ENCODE measurements at regions of chr4 and their contacts with region 1.

Region 1: DNA sequence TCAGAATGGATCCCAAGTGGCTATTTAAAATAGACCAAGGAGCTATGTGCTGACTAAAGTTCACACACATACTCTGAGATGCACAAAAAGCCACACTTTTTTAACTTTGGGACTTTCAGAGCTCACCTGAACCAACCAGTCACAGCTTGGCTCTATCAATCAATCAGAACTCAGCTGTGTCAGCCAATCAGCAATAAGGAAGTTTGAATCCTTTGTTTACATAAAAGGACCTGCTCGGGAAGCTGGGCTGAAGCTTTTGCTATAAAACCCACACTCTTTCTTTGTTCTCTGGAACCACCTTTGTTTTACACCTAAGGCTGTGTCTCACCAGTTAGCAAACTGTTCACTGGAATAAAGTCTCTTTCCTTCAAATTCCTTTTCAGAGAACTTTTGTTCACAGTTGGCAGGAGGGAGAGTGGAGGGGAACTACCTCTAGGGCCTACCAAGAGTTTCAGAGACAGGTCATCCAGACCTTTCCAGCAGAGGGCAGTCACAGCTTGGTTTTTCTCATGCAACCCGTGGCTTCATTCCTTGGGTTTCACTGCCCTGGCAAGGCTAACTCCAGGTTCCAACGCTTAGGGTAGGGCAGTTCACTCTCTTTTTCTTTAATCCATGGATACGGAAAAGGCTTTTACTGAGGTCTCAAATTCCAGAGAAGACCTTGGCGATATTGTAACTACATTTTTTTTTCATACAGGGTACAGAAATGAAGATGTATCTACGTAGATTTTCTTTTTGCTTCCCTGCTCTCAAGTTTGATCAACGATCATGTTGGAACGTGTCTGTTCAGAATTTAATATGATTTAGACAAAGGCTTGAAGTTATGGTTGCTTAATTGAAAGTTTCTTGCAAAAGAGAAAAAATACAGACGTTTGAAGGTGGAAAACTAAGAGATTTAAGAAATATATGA is 80.7 kb downstream of the GPRIN3 start:
- DNase-seq: peak; percentile 55 to 86 (median 77)
- ATAC-seq: peak; percentile 94
- H3K4me3 ChIP-seq: no peak overlapping the region
- H3K4me3 Mint-ChIP-seq: peak overlapping the region; percentile 70
- H3K27ac ChIP-seq: no peak overlapping the region
- H3K27ac Mint-ChIP-seq: no peak overlapping the region
- H3K4me1 ChIP-seq: no peaks in the 10 kb centered on the region
- H3K4me1 Mint-ChIP-seq: peaks cover 2% of the 10 kb centered on the region
- H3K27me3 ChIP-seq: no peaks in the 10 kb centered on the region
- H3K27me3 Mint-ChIP-seq: peaks cover 2% of the 10 kb centered on the region
- CTCF ChIP-seq: peak; percentile 82

Region 2: DNA sequence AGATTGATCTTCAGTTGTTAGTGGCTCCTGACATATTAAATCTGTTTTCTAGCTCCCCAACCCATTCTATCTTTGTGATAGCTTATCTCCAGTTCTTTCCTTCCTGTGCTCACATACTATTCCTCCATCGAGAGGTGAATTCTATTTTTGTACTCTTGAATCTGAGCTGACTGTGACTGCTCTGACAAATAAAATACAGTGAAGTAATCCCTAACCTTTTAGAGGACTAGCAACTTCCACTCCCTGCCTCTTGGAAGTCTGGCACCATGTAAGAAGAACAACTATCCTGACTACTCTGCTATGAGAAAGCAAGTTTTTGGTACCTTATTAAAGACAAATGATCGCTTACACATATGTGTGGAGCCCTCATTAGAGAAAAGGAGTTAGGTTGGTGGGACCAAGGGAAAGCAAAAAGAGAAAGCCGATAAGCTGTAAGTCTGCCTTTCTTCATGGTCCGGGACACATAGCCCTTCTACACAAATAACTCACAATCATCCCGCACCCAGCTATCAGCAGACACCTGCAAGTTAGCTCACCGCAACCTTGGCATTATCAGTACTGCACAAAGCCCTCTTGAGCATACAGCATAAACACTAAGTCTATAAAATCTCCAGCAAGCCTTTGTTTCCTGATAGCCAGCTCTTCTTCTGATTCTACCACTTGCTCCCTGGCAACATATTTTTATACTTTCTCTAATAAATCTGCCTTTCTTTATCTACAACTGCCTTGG is 929.0 kb before region 1 on chr4:
- CTCF ChIA-PET with region 1: no interaction called
- POLR2A ChIA-PET with region 1: no interaction called
- intact Hi-C with region 1: no loop called
- DNase-seq: no peak
- ATAC-seq: no peak
- H3K4me3 ChIP-seq: no peak overlapping the region
- H3K4me3 Mint-ChIP-seq: no peak overlapping the region
- H3K27ac ChIP-seq: no peak overlapping the region
- H3K27ac Mint-ChIP-seq: no peak overlapping the region
- H3K4me1 ChIP-seq: no peaks in the 10 kb centered on the region
- H3K4me1 Mint-ChIP-seq: no peaks in the 10 kb centered on the region
- H3K27me3 ChIP-seq: no peaks in the 10 kb centered on the region
- H3K27me3 Mint-ChIP-seq: no peaks in the 10 kb centered on the region
- CTCF ChIP-seq: no peak

Region 3: DNA sequence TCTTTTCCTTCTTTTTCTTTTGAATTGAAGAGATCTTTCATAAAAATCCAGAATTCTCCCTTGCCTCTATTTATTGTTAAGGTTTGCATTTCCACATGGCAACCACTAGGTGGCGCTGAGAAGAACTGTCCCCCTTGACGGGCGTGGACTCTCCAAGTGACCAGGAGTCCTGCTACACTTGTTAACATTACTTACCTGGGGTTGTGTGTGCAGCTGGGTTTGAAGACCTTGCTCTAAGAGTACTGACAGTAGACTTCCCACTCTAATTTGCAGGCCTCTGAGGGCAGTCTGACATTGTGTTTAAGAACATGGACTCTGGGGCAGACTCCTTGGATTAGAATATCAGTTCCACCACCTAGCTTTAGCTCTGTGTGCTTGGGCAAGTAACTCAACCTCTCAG is 27.9 kb after region 1 on chr4:
- CTCF ChIA-PET with region 1: interaction called, 29 read pairs
- POLR2A ChIA-PET with region 1: no interaction called
- intact Hi-C with region 1: no loop called
- DNase-seq: peak in 8 of 9 experiments; percentile 30 to 76 (median 50)
- ATAC-seq: peak; percentile 56
- H3K4me3 ChIP-seq: no peak overlapping the region
- H3K4me3 Mint-ChIP-seq: no peak overlapping the region
- H3K27ac ChIP-seq: peak overlapping the region in 1 of 2 experiments; percentile 59
- H3K27ac Mint-ChIP-seq: peak overlapping the region; percentile 20
- H3K4me1 ChIP-seq: peaks cover 16% of the 10 kb centered on the region
- H3K4me1 Mint-ChIP-seq: peaks cover 75% of the 10 kb centered on the region
- H3K27me3 ChIP-seq: no peaks in the 10 kb centered on the region
- H3K27me3 Mint-ChIP-seq: no peaks in the 10 kb centered on the region
- CTCF ChIP-seq: peak; percentile 96

Region 4: GRCh38 chr4:89294573-89295269 is 67.8 kb after region 1 on chr4:
- CTCF ChIA-PET with region 1: interaction called, 11 read pairs
- POLR2A ChIA-PET with region 1: interaction called, 3 read pairs
- intact Hi-C with region 1: no loop called
- DNase-seq: peak in 2 of 9 experiments; percentile 78 to 88
- ATAC-seq: peak; percentile 74
- H3K4me3 ChIP-seq: peak overlapping the region in 1 of 2 experiments; percentile 21
- H3K4me3 Mint-ChIP-seq: peak overlapping the region; percentile 60
- H3K27ac ChIP-seq: peak overlapping the region; percentile 42 to 82
- H3K27ac Mint-ChIP-seq: peak overlapping the region; percentile 89
- H3K4me1 ChIP-seq: peaks cover 80% of the 10 kb centered on the region
- H3K4me1 Mint-ChIP-seq: peaks cover 89% of the 10 kb centered on the region
- H3K27me3 ChIP-seq: no peaks in the 10 kb centered on the region
- H3K27me3 Mint-ChIP-seq: no peaks in the 10 kb centered on the region
- CTCF ChIP-seq: no peak

Region 5: GRCh38 chr4:89365776-89366175 is 138.9 kb after region 1 on chr4:
- CTCF ChIA-PET with region 1: no interaction called
- POLR2A ChIA-PET with region 1: no interaction called
- intact Hi-C with region 1: no loop called
- DNase-seq: no peak
- ATAC-seq: no peak
- H3K4me3 ChIP-seq: no peak overlapping the region
- H3K4me3 Mint-ChIP-seq: no peak overlapping the region
- H3K27ac ChIP-seq: no peak overlapping the region
- H3K27ac Mint-ChIP-seq: no peak overlapping the region
- H3K4me1 ChIP-seq: no peaks in the 10 kb centered on the region
- H3K4me1 Mint-ChIP-seq: peaks cover 7% of the 10 kb centered on the region
- H3K27me3 ChIP-seq: no peaks in the 10 kb centered on the region
- H3K27me3 Mint-ChIP-seq: no peaks in the 10 kb centered on the region
- CTCF ChIP-seq: no peak

Region 6: DNA sequence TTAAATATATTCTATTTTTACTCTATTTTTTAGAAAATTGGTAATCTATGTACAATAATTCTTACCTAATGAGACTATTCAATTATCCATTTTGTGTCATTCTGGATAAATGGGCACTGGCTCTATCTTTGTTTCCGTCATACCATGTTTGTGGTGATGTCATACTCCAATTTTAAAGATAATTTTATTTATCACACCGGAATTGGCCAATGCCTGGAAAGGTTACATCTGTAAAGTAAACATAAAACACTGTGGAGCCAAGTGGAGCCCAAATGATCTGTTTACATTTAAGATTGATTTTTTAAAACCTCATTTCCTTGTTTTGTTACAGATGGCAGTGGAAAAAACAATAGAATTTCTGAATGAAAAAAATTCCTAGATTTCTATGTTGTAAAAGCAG is 200.8 kb after region 1 on chr4:
- CTCF ChIA-PET with region 1: interaction called, 18 read pairs
- POLR2A ChIA-PET with region 1: no interaction called
- intact Hi-C with region 1: no loop called
- DNase-seq: no peak
- ATAC-seq: no peak
- H3K4me3 ChIP-seq: no peak overlapping the region
- H3K4me3 Mint-ChIP-seq: no peak overlapping the region
- H3K27ac ChIP-seq: no peak overlapping the region
- H3K27ac Mint-ChIP-seq: no peak overlapping the region
- H3K4me1 ChIP-seq: no peaks in the 10 kb centered on the region
- H3K4me1 Mint-ChIP-seq: no peaks in the 10 kb centered on the region
- H3K27me3 ChIP-seq: no peaks in the 10 kb centered on the region
- H3K27me3 Mint-ChIP-seq: peaks cover 4% of the 10 kb centered on the region
- CTCF ChIP-seq: no peak

Region 7: DNA sequence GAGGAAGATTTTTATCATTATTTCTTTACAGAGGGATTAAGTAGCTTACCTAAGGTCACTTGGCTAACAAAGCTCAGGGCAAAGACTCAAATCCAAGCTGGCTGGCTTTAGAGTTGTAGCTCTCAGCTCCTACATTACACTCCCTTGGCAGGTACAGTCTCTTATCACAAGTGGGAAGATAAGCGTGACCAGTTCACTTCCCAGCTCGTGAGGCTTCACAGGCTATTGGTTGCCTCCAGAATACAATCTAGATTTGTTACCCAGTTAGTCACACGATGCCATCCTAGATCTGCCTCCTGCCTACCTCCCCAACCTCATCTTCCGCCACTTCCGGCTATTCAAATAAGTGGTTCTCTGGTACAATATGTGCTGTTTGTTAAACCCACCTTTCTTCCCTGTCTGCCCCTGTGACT is 671.4 kb after region 1 on chr4:
- CTCF ChIA-PET with region 1: interaction called, 8 read pairs
- POLR2A ChIA-PET with region 1: no interaction called
- intact Hi-C with region 1: loop called (anchors 1 kb)
- DNase-seq: no peak
- ATAC-seq: no peak
- H3K4me3 ChIP-seq: no peak overlapping the region
- H3K4me3 Mint-ChIP-seq: no peak overlapping the region
- H3K27ac ChIP-seq: no peak overlapping the region
- H3K27ac Mint-ChIP-seq: no peak overlapping the region
- H3K4me1 ChIP-seq: peaks cover 18% of the 10 kb centered on the region
- H3K4me1 Mint-ChIP-seq: peaks cover 22% of the 10 kb centered on the region
- H3K27me3 ChIP-seq: no peaks in the 10 kb centered on the region
- H3K27me3 Mint-ChIP-seq: peaks cover 2% of the 10 kb centered on the region
- CTCF ChIP-seq: no peak

Measured in CD8-positive, alpha-beta T cell (primary cell).